H1 (cell line): ENCODE measurements at regions of chr15 and their contacts with region 1.

Region 1: DNA sequence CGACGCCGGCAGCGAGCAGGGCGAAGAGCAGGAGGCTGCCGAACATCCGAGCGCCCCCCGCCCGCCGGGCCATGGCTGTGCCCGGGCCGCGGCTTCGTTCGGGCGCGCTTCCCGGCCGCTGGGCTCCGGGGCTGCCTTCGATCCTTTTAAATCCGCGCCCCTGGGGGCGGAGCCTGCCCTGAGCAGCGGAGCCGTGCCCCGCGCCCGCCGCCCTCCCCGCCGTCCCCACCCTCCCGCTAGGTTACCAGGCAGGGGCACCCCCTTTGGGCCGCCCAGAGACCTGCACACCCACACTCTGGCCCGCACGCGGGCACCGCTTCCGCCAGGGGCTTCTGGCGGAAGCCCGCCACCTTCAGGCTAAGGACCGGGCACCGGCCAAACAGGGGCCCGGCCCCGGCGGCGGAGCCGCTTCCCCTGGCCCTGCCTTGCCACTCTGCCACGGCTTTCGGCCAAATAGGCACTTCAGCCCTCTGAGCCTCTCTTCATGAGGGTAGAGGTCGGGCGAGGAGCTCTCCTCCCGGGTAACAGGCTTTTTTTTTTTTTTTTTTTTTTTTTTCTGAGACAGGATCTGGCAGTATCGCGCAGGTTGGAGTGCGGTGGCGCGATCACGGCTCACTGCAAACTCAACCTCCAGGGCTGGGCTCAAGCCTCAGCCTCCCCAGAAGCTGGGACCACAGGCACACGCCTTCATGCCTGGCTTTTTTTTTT is at the start of gene NMB:
- DNase-seq: peak; percentile 77 to 89
- H3K4me3 ChIP-seq: peak within 1 kb of the TSS; percentile 56 to 74 (median 62)
- H3K27ac ChIP-seq: peak within 1 kb of the TSS; percentile 49; the same call in 1 of the 2 replicates
- H3K4me1 ChIP-seq: peaks cover 0 to 21% (median 14%) of the 10 kb centered on the region in 4 experiments; a peak in 6 of 7 replicates
- H3K27me3 ChIP-seq: peaks cover 0 to 13% (median 9%) of the 10 kb centered on the region in 4 experiments; a peak in 5 of 7 replicates
- CTCF ChIP-seq: peak; percentile 62 to 98 (median 62)
- EP300 ChIP-seq: no peak
- POLR2A ChIP-seq: peak; percentile 55 to 80
- RAD21 ChIP-seq: peak; percentile 43 to 63; a peak in 3 of 4 replicates
- total RNA-seq, gene NMB: 9.3 and 12.4 TPM in 2 replicates

Region 2: DNA sequence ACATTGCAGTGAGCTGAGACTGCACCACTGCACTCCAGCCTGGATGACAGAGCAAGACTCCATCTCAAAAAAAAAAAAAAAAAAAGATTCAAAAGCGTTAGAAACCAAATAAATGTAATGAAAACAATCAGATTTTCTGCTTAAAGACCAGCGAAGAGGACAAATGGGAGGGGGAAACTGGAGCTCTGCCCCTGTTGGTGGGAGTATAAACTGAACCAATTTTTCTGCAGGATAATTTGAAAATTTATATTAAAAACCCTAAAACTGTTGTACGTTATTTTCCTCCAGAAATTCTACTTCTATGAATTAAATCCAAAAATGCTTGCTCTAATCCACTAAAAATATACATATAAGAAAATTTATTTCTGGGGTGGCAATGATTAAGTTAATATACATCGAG is 82.7 kb before region 1 on chr15:
- CTCF ChIA-PET with region 1: interaction called, 15 read pairs
- POLR2A ChIA-PET with region 1: no interaction called
- DNase-seq: no peak
- H3K4me3 ChIP-seq: no peak overlapping the region
- H3K27ac ChIP-seq: no peak overlapping the region
- H3K4me1 ChIP-seq: no peaks in the 10 kb centered on the region
- H3K27me3 ChIP-seq: no peaks in the 10 kb centered on the region
- CTCF ChIP-seq: no peak
- EP300 ChIP-seq: no peak
- POLR2A ChIP-seq: no peak
- RAD21 ChIP-seq: no peak

Region 3: GRCh38 chr15:84595660-84596059 is 62.6 kb before region 1 on chr15:
- CTCF ChIA-PET with region 1: interaction called, 86 read pairs
- POLR2A ChIA-PET with region 1: interaction called, 14 read pairs
- DNase-seq: no peak
- H3K4me3 ChIP-seq: no peak overlapping the region
- H3K27ac ChIP-seq: no peak overlapping the region
- H3K4me1 ChIP-seq: peaks cover 0 to 10% (median 2%) of the 10 kb centered on the region in 4 experiments; a peak in 4 of 7 replicates
- H3K27me3 ChIP-seq: peaks cover 0 to 3% (median 0%) of the 10 kb centered on the region in 4 experiments; a peak in 1 of 7 replicates
- CTCF ChIP-seq: no peak
- EP300 ChIP-seq: no peak
- POLR2A ChIP-seq: no peak
- RAD21 ChIP-seq: no peak

Region 4: DNA sequence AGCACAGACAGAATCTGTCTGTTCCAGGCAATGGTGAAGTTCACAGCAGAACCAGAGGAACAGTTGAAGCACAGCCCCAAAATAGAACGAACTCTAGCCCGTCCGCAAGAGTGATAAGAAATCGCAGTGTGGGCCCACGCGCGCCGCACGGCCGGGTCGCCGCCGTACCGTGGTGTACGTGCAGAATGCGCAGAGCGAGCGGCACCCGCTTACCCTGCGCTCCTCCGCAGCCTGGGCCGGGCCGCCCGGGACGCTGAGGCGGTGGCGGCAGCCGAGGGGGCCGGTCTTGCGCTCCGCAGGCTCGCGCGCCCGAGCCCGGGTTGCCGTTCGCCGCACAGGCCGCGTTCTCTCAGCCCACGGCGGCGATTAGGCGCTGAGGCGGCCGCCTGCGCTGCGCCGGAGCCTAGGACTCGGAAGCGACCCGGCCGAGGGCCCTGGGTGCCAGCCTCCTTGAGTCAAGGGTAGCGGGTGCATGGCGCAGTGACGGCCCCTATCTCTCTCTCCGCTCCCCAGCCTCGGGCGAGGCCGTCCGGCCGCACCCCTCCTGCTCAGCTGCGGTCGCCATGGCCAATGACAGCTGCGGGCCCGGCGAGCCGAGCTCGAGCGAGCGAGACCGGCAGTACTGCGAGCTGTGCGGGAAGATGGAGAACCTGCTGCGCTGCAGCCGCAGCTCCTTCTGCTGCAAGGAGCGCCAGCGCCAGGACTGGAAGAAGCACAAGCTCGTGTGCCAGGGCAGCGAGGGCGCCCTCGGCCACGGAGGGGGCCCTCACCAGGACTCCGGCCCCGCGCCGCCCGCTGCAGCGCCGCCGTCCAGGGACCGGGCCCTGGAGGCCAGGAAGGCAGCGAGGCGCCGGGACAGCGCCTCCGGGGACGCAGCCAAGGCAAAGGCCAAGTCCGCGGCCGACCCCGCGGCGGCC is 24.7 kb before region 1 on chr15:
- CTCF ChIA-PET with region 1: interaction called, 57 read pairs
- POLR2A ChIA-PET with region 1: interaction called, 17 read pairs
- DNase-seq: peak in 1 of 2 experiments; percentile 81
- H3K4me3 ChIP-seq: peak overlapping the region; percentile 43 to 71 (median 59)
- H3K27ac ChIP-seq: no peak overlapping the region
- H3K4me1 ChIP-seq: peaks cover 0 to 6% (median 4%) of the 10 kb centered on the region in 4 experiments; a peak in 6 of 7 replicates
- H3K27me3 ChIP-seq: peaks cover 0 to 21% (median 2%) of the 10 kb centered on the region in 4 experiments; a peak in 5 of 7 replicates
- CTCF ChIP-seq: no peak
- EP300 ChIP-seq: no peak
- POLR2A ChIP-seq: no peak
- RAD21 ChIP-seq: no peak

Region 5: GRCh38 chr15:84818261-84819131 is 160.3 kb after region 1 on chr15:
- CTCF ChIA-PET with region 1: interaction called, 10 read pairs
- POLR2A ChIA-PET with region 1: interaction called, 16 read pairs
- DNase-seq: no peak
- H3K4me3 ChIP-seq: peak overlapping the region in 3 of 4 experiments; percentile 18 to 53 (median 36); a peak in 2 of 8 replicates
- H3K27ac ChIP-seq: no peak overlapping the region
- H3K4me1 ChIP-seq: peaks cover 9 to 25% (median 18%) of the 10 kb centered on the region in 4 experiments
- H3K27me3 ChIP-seq: peaks cover 0 to 3% (median 0%) of the 10 kb centered on the region in 4 experiments; a peak in 2 of 7 replicates
- CTCF ChIP-seq: peak in 2 of 3 experiments; percentile 2 to 5; a peak in 1 of 4 replicates
- EP300 ChIP-seq: no peak
- POLR2A ChIP-seq: no peak; a peak in 1 of 3 replicates
- RAD21 ChIP-seq: no peak

Region 6: GRCh38 chr15:84852212-84852611 is 194.0 kb after region 1 on chr15:
- CTCF ChIA-PET with region 1: no interaction called
- POLR2A ChIA-PET with region 1: no interaction called
- DNase-seq: no peak
- H3K4me3 ChIP-seq: no peak overlapping the region
- H3K27ac ChIP-seq: no peak overlapping the region
- H3K4me1 ChIP-seq: no peaks in the 10 kb centered on the region
- H3K27me3 ChIP-seq: no peaks in the 10 kb centered on the region
- CTCF ChIP-seq: no peak
- EP300 ChIP-seq: no peak
- POLR2A ChIP-seq: no peak
- RAD21 ChIP-seq: no peak